Activated naive CD4-positive, alpha-beta T cell treated with anti-CD3 and anti-CD28 coated beads for 36 hours (primary cell): ENCODE measurements at regions of chr7 and their contacts with region 1.

Region 1: GRCh38 chr7:130838738-130839137 is 104.7 kb upstream of the KLF14 start:
- DNase-seq: peak; percentile 26
- H3K4me3 Mint-ChIP-seq: no peak overlapping the region
- H3K27ac Mint-ChIP-seq: no peak overlapping the region
- H3K4me1 Mint-ChIP-seq: peaks cover 23% of the 10 kb centered on the region
- H3K27me3 Mint-ChIP-seq: peaks cover 32% of the 10 kb centered on the region

Region 2: DNA sequence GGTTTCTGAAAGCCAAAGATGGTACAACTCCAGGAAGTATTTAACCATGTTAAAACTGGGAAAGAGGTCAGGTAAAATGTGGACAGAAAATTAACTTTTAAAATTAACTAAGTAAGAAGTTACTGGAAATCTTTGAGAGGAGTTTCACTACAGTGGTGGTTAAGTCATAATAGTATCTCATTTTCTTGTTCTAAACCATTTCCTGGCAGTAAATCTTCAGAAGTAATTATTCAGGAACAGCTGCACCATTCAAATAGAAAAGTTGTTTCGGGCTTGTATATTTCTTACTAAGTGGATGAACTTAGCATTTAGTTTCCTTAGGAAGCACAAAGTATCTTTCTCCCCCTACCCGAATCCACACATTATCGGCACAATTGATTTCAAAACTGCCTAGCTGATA is 197.2 kb before region 1 on chr7:
- CTCF ChIA-PET with region 1: no interaction called
- intact Hi-C with region 1: loop called (anchors 1 kb)
- DNase-seq: no peak
- H3K4me3 Mint-ChIP-seq: no peak overlapping the region
- H3K27ac Mint-ChIP-seq: peak overlapping the region; percentile 65
- H3K4me1 Mint-ChIP-seq: peaks cover 18% of the 10 kb centered on the region
- H3K27me3 Mint-ChIP-seq: no peaks in the 10 kb centered on the region

Region 3: GRCh38 chr7:130649004-130649790 is 189.5 kb before region 1 on chr7:
- CTCF ChIA-PET with region 1: no interaction called
- intact Hi-C with region 1: loop called (anchors 2 kb)
- DNase-seq: peak; percentile 53
- H3K4me3 Mint-ChIP-seq: no peak overlapping the region
- H3K27ac Mint-ChIP-seq: peak overlapping the region; percentile 79
- H3K4me1 Mint-ChIP-seq: peaks cover 29% of the 10 kb centered on the region
- H3K27me3 Mint-ChIP-seq: no peaks in the 10 kb centered on the region

Region 4: DNA sequence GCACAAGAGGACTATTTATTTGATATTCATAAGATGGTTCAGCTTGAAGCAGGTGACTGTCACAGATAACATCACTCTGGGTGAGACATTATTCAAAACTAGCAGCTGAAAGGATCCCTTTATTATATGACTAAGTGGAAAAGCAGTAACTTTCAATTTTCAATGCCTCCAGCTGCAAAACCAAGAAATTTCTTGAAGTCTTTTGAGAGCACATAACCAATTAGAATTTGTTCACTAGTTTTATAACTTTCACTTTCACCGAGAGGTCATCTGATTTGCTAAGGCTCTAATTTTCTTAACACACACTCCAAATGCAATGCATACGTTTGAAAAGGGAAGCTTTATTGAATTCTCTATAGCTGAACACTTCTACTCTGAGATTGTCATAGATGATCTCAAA is 16.1 kb before region 1 on chr7:
- CTCF ChIA-PET with region 1: no interaction called
- intact Hi-C with region 1: loop called (anchors 2 kb)
- DNase-seq: no peak
- H3K4me3 Mint-ChIP-seq: no peak overlapping the region
- H3K27ac Mint-ChIP-seq: no peak overlapping the region
- H3K4me1 Mint-ChIP-seq: peaks cover 10% of the 10 kb centered on the region
- H3K27me3 Mint-ChIP-seq: no peaks in the 10 kb centered on the region

Region 5: GRCh38 chr7:130966246-130967009 is 127.7 kb after region 1 on chr7:
- CTCF ChIA-PET with region 1: no interaction called
- intact Hi-C with region 1: loop called (anchors 2 kb)
- DNase-seq: no peak
- H3K4me3 Mint-ChIP-seq: peak overlapping the region; percentile 1
- H3K27ac Mint-ChIP-seq: peak overlapping the region; percentile 90
- H3K4me1 Mint-ChIP-seq: peaks cover 77% of the 10 kb centered on the region
- H3K27me3 Mint-ChIP-seq: no peaks in the 10 kb centered on the region

Region 6: DNA sequence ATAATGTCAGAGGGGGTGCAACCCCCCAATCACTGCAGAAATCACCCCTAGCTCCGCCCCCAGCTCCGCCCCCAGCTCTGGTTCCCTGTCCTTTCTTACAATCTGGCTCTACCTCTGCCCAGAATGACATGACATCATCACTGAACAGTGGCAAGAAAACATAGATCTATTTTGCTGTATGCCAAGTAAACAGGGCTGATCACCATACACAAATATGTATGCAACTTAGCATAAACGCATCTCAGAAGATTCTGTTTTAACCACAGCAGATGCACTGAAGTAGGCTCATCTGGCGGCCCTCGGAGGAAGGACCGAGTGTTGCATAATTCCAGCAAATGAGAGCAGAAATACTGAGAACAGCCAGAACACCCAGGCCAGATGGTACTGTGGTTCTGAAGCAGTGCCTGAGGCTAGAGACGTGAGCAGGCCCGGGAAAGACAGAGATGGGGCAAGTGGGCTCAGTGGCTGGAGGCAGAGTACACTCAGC is 188.6 kb after region 1 on chr7:
- CTCF ChIA-PET with region 1: no interaction called
- intact Hi-C with region 1: loop called (anchors 1 kb)
- DNase-seq: peak; percentile 52
- H3K4me3 Mint-ChIP-seq: no peak overlapping the region
- H3K27ac Mint-ChIP-seq: peak overlapping the region; percentile 74
- H3K4me1 Mint-ChIP-seq: peaks cover 86% of the 10 kb centered on the region
- H3K27me3 Mint-ChIP-seq: no peaks in the 10 kb centered on the region